ENCODE measurements at regions of chr1 and their contacts with region 1.

Region 1: DNA sequence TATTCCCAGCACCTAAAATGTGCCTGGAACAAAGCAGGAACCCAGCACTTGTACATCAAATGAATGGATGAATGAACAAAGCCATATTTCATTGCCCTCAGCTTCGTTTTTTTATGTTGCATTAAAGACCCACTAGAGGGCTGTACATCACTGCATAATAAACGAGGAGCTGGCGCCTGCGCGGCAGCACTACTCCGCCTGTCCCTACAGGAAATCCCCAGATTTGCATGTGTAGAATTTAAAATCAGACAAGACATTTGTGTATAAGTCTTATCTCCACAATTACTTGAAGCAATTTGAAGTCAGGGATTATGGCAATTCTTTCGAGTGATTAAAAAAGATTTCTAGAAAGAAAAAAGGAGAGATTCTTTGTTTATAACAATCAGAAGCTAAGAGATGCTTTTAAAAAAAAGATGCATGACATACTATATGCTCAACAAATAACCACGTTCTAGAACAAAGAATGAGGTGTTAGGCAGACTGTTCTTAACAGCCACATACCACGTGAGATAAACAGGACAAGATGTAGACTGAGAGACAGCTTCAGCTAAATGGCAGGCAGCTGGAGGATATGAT is 5.4 kb upstream of the NEK2 start:
- DNase-seq: peak; percentile 63 to 81
- H3K4me3 ChIP-seq: no peak overlapping the region
- H3K27ac ChIP-seq: no peak overlapping the region
- H3K4me1 ChIP-seq: no peaks in the 10 kb centered on the region; the same call in 1 of the 2 replicates
- H3K27me3 ChIP-seq: no peaks in the 10 kb centered on the region
- CTCF ChIP-seq: peak; percentile 79

Region 2: DNA sequence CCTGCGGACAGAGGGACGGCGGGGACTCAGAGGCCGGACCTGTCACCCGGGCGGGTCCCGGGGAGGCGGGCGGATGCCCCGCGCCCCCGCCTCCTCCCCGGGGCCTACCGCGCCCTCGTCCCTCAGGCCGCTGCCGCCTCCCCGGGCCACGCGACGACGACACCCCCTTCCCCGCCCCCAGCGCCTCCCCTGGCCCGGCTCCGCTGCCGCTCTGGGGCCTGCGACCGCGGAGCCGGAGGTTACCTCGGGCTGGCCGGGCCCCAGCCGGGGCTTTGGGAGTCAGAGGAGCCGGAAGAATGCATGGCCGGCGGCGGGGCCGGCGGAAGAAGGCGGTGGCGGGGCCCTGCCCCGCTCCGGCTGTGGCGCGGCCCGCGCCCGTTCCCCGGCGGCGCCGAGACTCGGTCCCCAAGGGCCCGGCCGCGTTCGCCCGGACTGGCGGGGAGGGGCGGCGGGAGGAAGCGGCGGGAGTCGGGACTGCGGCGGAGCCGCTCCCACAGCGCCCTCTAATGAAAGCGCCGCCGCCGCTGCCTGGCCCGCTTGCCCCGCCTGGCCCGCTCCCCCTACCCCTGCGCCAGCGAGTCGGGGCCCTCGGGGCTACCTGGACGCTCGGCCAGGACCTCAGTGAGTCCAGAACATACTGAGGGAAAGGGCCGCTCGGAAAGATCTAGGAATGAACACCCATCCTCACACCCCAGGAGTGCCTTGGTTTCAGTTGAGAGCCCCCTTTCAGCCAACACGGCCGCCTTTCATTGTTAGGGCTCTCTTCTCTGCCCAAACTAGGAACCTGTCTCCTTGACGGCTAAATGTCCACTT is 149.7 kb after region 1 on chr1 and contains the start of gene LPGAT1:
- CTCF ChIA-PET with region 1: no interaction called
- POLR2A ChIA-PET with region 1: no interaction called
- intact Hi-C with region 1: loop called (anchors 2 kb)
- DNase-seq: peak in 1 of 2 experiments; percentile 80
- H3K4me3 ChIP-seq: peak within 1 kb of the TSS; percentile 75
- H3K27ac ChIP-seq: peak within 1 kb of the TSS; percentile 29; the same call in 1 of the 2 replicates
- H3K4me1 ChIP-seq: peaks cover 15% of the 10 kb centered on the region; the same call in 1 of the 2 replicates
- H3K27me3 ChIP-seq: no peaks in the 10 kb centered on the region
- CTCF ChIP-seq: peak; percentile 62
- total RNA-seq, gene LPGAT1: 46.0 and 46.8 TPM in 2 replicates

Region 3: DNA sequence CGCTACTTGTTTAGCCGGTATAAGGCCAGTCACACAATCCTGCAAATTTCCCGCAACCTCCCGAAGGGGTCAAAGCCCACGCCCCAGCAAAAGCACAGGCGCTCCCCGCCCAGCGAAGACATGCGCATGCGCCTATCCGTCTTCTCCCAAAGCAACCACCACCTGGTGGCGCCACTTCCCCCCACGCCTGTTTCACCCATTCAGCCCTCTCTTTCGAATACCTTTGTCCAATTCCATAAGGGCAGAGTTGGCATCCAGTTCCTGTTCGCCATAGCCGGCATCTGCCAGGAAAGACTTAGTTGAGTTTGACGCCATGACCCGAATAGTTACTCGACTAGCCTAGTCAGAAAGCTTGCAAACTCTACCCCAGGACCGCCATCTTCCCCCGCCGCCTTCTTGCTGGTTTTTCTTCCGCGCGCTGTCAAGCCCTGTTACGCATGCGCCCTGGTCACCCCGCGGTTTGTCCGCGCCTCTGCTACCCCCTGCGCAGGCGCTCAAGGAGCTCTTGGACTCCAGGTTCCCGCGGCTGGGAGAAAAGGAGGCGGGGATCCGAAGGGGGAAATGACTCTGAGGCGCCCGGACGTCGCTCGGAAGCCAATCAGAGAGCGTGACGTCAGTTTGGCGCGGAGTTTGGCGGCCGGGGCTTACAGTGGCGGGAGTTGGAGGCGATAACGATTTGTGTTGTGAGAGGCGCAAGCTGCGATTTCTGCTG is 354.4 kb after region 1 on chr1 and contains the starts of genes DTL and INTS7:
- CTCF ChIA-PET with region 1: interaction called, 47 read pairs
- POLR2A ChIA-PET with region 1: interaction called, 8 read pairs
- intact Hi-C with region 1: loop called (anchors 1 kb)
- DNase-seq: peak; percentile 97 to 98
- H3K4me3 ChIP-seq: peak within 1 kb of the TSS; percentile 93
- H3K27ac ChIP-seq: peak within 1 kb of the TSS; percentile 55
- H3K4me1 ChIP-seq: peaks cover 50% of the 10 kb centered on the region
- H3K27me3 ChIP-seq: no peaks in the 10 kb centered on the region
- CTCF ChIP-seq: peak; percentile 81
- total RNA-seq, gene DTL: 22.5 TPM in 2 replicates
- total RNA-seq, gene INTS7: 18.4 and 24.7 TPM in 2 replicates

Region 4: DNA sequence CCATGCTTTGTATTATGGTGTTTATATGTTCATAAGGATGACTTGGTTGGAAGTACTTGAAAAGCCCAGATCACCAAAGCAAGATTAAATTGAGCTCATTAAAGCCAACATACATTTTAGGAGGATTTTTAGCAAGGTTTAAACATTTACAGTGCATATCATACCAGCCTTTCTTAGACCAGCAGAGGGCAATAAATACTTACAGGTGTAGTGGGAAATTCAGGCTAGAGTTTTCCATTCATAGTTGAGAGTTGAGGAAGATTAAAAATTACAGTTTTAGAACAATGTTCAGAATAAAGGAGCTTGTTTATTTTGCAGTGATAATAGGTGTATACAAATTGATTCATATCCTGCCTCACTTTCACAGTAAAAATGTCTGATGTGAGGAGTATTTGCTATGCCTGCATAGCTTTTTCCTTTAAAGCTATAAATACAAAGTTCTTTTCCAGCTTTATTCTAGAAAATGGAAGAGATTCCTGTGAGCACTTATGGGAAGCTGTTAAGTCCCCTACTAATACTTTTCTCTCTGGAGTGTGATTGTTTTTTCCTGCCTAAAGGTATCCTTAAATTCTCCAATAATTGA is 390.0 kb after region 1 on chr1:
- CTCF ChIA-PET with region 1: interaction called, 13 read pairs
- POLR2A ChIA-PET with region 1: no interaction called
- intact Hi-C with region 1: no loop called
- DNase-seq: no peak
- H3K4me3 ChIP-seq: no peak overlapping the region
- H3K27ac ChIP-seq: no peak overlapping the region
- H3K4me1 ChIP-seq: no peaks in the 10 kb centered on the region
- H3K27me3 ChIP-seq: no peaks in the 10 kb centered on the region
- CTCF ChIP-seq: peak; percentile 75

Region 5: GRCh38 chr1:212782422-212783154 is 1101.7 kb after region 1 on chr1:
- CTCF ChIA-PET with region 1: no interaction called
- POLR2A ChIA-PET with region 1: no interaction called
- intact Hi-C with region 1: loop called (anchors 10 kb)
- DNase-seq: peak in 1 of 2 experiments; percentile 38
- H3K4me3 ChIP-seq: no peak overlapping the region
- H3K27ac ChIP-seq: no peak overlapping the region
- H3K4me1 ChIP-seq: no peaks in the 10 kb centered on the region
- H3K27me3 ChIP-seq: no peaks in the 10 kb centered on the region
- CTCF ChIP-seq: peak; percentile 81